Endothelial cell of umbilical vein (primary cell): ENCODE measurements at regions of chr5 and their contacts with region 1.

Region 1: DNA sequence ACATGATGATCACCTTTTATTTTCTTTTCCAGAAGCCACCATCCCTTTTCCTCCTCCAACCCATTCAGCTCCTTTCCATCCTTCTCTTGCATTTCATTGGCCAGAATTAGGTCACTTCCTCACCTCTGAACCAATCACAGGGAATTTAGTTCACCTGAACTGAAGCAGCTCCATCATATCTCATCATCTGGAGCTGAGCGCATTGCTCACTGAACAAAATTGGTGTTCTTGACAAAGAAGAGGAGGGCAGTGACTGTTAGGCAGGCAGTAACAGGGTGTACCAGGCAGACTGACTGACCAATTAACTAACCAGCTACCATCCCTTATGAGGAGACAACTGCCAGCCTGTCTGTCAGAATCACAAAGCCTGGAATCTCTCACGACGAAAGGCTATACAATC is 1.8 kb upstream of the ZNF354A start:
- DNase-seq: no peak
- H3K4me3 ChIP-seq: no peak overlapping the region
- H3K27ac ChIP-seq: no peak overlapping the region
- H3K4me1 ChIP-seq: no peaks in the 10 kb centered on the region
- H3K27me3 ChIP-seq: no peaks in the 10 kb centered on the region
- CTCF ChIP-seq: no peak
- POLR2A ChIP-seq: no peak

Region 2: GRCh38 chr5:178279725-178280438 is 452.4 kb before region 1 on chr5:
- CTCF ChIA-PET with region 1: no interaction called
- POLR2A ChIA-PET with region 1: no interaction called
- dilution Hi-C with region 1: no loop called
- intact Hi-C with region 1: loop called (anchors 1 kb)
- DNase-seq: peak; percentile 70
- H3K4me3 ChIP-seq: no peak overlapping the region
- H3K27ac ChIP-seq: no peak overlapping the region
- H3K4me1 ChIP-seq: no peaks in the 10 kb centered on the region
- H3K27me3 ChIP-seq: no peaks in the 10 kb centered on the region
- CTCF ChIP-seq: peak; percentile 94 to 97
- POLR2A ChIP-seq: no peak

Region 3: GRCh38 chr5:178642351-178642971 is 89.8 kb before region 1 on chr5:
- CTCF ChIA-PET with region 1: no interaction called
- POLR2A ChIA-PET with region 1: no interaction called
- dilution Hi-C with region 1: no loop called
- intact Hi-C with region 1: loop called (anchors 1 kb)
- DNase-seq: peak; percentile 54
- H3K4me3 ChIP-seq: no peak overlapping the region
- H3K27ac ChIP-seq: peak overlapping the region; percentile 24
- H3K4me1 ChIP-seq: peaks cover 17% of the 10 kb centered on the region
- H3K27me3 ChIP-seq: no peaks in the 10 kb centered on the region
- CTCF ChIP-seq: no peak
- POLR2A ChIP-seq: no peak

Region 4: DNA sequence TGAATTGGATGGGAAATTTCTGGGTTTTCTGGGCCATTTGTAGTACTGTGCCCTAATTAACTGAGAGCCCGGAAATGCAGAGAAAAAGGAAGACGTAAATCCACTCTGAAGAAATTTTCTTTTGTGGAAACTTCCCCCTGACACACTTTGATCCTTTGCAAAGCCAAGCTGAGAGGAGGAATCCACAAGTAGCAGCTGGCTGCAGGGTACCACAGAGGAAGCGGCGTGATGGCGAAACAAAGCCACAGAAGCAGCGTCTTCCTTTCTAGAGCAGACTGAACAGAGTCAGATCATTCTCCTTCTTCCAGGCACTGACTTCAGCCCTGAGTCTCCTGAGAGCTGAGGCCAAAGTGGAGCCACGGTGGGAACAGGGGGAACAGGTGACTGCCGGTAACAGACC is 45.3 kb after region 1 on chr5:
- CTCF ChIA-PET with region 1: no interaction called
- POLR2A ChIA-PET with region 1: no interaction called
- dilution Hi-C with region 1: no loop called
- intact Hi-C with region 1: no loop called
- DNase-seq: no peak
- H3K4me3 ChIP-seq: no peak overlapping the region
- H3K27ac ChIP-seq: no peak overlapping the region
- H3K4me1 ChIP-seq: no peaks in the 10 kb centered on the region
- H3K27me3 ChIP-seq: no peaks in the 10 kb centered on the region
- CTCF ChIP-seq: no peak
- POLR2A ChIP-seq: no peak

Region 5: GRCh38 chr5:178895651-178896571 is 163.6 kb after region 1 on chr5 and contains the start of gene ZFP2:
- CTCF ChIA-PET with region 1: no interaction called
- POLR2A ChIA-PET with region 1: no interaction called
- dilution Hi-C with region 1: no loop called
- intact Hi-C with region 1: loop called (anchors 1 kb)
- DNase-seq: peak; percentile 58
- H3K4me3 ChIP-seq: peak within 1 kb of the TSS; percentile 41 to 59 (median 54)
- H3K27ac ChIP-seq: no peak within 1 kb of the TSS
- H3K4me1 ChIP-seq: no peaks in the 10 kb centered on the region
- H3K27me3 ChIP-seq: no peaks in the 10 kb centered on the region
- CTCF ChIP-seq: no peak
- POLR2A ChIP-seq: no peak
- total RNA-seq, gene ZFP2: 0.21 and 0.75 TPM in 2 replicates

Region 6: GRCh38 chr5:179060116-179061008 is 328.1 kb after region 1 on chr5 and contains the start of gene ZNF354C:
- CTCF ChIA-PET with region 1: interaction called, 17 read pairs
- POLR2A ChIA-PET with region 1: interaction called, 7 read pairs
- dilution Hi-C with region 1: no loop called
- intact Hi-C with region 1: no loop called
- DNase-seq: peak; percentile 93
- H3K4me3 ChIP-seq: peak within 1 kb of the TSS; percentile 1 to 73 (median 37)
- H3K27ac ChIP-seq: peak within 1 kb of the TSS; percentile 6
- H3K4me1 ChIP-seq: peaks cover 6% of the 10 kb centered on the region
- H3K27me3 ChIP-seq: no peaks in the 10 kb centered on the region
- CTCF ChIP-seq: no peak
- POLR2A ChIP-seq: peak; percentile 44
- total RNA-seq, gene ZNF354C: 4.7 and 5.0 TPM in 2 replicates

Region 7: DNA sequence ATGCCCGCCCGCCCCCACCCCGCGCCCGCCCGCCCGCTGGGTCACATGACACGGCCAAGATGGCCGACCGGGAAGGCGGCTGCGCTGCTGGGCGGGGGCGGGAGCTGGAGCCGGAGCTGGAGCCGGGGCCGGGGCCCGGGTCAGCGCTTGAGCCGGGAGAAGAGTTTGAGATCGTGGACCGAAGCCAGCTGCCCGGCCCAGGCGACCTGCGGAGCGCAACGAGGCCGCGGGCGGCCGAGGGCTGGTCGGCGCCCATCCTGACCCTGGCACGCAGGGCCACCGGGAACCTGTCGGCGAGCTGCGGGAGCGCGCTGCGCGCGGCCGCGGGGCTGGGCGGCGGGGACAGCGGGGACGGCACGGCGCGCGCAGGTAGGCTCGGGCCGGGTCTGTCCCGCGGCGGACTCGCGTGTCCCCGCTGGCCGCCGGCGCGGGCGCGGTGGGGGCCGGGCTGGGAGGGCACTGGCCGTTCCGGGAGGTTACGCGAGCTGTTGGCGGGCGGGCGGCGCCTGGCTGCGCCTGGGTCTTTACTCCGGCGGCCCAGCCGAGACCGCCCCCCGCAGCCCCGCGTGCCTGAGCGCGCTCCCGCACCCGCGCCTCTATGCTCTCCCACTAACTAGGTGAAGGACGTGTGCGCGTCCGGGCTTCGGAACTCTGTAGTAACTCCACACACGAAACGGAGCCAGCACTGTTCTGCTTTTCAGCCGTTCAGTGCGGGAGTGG is 818.4 kb after region 1 on chr5 and contains the start of gene RUFY1:
- CTCF ChIA-PET with region 1: no interaction called
- POLR2A ChIA-PET with region 1: no interaction called
- dilution Hi-C with region 1: no loop called
- intact Hi-C with region 1: loop called (anchors 1 kb)
- DNase-seq: peak; percentile 85
- H3K4me3 ChIP-seq: peak within 1 kb of the TSS; percentile 71 to 89 (median 79)
- H3K27ac ChIP-seq: peak within 1 kb of the TSS; percentile 80
- H3K4me1 ChIP-seq: peaks cover 19% of the 10 kb centered on the region
- H3K27me3 ChIP-seq: no peaks in the 10 kb centered on the region
- CTCF ChIP-seq: no peak
- POLR2A ChIP-seq: peak; percentile 69
- total RNA-seq, gene RUFY1: 43.3 and 44.9 TPM in 2 replicates